Transverse colon (tissue), 4 donors: ENCODE measurements at regions of chr17 and their contacts with region 1.

Region 1: GRCh38 chr17:33651686-33652085 is 358.6 kb upstream of the ASIC2 start:
- DNase-seq: no peak
- H3K4me3 ChIP-seq: no peak overlapping the region
- H3K27ac ChIP-seq: no peak overlapping the region
- H3K4me1 ChIP-seq: no peaks in the 10 kb centered on the region
- H3K27me3 ChIP-seq: no peaks in the 10 kb centered on the region
- CTCF ChIP-seq: no peak
- EP300 ChIP-seq: no peak
- POLR2A ChIP-seq: no peak

Region 2: DNA sequence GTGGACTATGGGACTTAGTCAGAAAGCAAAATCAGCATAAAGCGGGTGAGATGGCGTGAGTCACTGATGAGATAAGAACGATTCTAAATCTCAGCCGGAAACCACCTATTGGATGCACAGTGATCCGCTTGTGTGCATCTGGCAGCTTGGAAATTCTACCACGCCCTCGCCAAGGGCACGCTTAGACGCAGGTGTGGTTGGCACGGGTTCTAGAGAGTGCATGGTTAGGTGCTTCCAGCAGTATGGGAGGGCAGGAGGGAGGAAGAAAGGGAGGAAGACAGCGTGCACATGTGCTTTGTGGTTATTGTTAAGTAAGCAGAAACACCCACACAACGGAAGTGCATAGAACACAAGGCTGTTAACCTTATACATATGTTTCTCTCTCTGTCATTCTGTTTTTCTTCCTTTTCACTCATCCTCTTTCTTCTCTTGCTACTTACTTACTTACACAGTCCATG is 15.4 kb after region 1 on chr17:
- in situ Hi-C with region 1: no loop called
- intact Hi-C with region 1: loop called (anchors 1 kb)
- DNase-seq: no peak
- H3K4me3 ChIP-seq: no peak overlapping the region
- H3K27ac ChIP-seq: no peak overlapping the region
- H3K4me1 ChIP-seq: no peaks in the 10 kb centered on the region
- H3K27me3 ChIP-seq: no peaks in the 10 kb centered on the region
- CTCF ChIP-seq: no peak
- EP300 ChIP-seq: no peak
- POLR2A ChIP-seq: no peak